Ascending aorta (tissue), 2 donors: ENCODE measurements at regions of chr2 and their contacts with region 1.

Region 1: GRCh38 chr2:236776695-236777251 is 207.1 kb downstream of the ACKR3 start:
- DNase-seq: peak; percentile 30 to 87
- H3K4me3 ChIP-seq: no peak overlapping the region
- H3K27ac ChIP-seq: peak overlapping the region; percentile 38 to 65
- H3K4me1 ChIP-seq: peaks cover 3 to 12% of the 10 kb centered on the region in 2 donors
- H3K27me3 ChIP-seq: no peaks in the 10 kb centered on the region
- CTCF ChIP-seq: no peak

Region 2: DNA sequence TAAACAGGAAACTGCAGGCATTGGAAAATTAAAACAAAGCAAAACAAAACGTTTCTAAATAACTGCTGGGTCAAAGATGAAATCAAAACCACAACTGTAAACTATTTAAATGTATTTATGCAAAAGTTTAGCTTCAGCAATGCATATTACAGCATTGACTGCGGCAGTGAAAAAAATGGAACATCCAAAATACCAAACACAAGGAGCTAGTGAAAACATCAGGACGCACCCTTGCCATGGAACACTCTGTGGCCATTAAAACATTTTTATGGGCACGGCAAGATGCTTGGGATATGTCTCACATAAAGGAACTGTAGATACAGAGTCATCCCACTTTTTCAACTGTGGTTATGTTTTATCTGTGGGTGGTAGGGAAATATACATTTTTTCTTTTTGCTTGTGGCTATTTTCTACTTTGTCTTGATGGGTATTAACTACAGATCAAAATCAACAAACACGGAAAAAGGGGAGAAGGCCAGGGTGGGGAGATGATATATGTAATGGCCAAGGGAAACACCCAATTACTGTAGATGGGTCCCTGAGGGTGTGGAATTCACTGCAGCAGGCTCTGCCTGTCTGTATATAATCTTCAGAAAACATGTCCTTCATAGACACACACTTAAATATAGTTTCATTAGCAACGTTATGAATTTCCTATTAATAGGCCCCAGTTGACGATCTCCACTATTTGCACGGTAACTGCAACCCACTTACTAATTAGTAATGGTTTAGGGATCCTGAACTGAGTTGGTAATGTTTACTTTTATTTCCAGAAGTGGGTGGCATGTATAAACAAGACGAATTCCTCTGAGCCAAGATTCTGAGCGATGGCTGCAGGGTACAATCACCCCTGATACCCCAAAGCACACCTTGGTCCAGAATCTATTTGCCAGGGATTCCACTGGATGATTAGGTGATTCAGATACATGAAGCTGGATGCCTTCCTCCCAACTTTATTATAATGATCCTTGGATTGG is 96.6 kb before region 1 on chr2:
- intact Hi-C with region 1: loop called (anchors 5 kb)
- DNase-seq: no peak
- H3K4me3 ChIP-seq: no peak overlapping the region
- H3K27ac ChIP-seq: no peak overlapping the region
- H3K4me1 ChIP-seq: peaks cover 0 to 14% of the 10 kb centered on the region in 2 donors
- H3K27me3 ChIP-seq: no peaks in the 10 kb centered on the region
- CTCF ChIP-seq: no peak

Region 3: DNA sequence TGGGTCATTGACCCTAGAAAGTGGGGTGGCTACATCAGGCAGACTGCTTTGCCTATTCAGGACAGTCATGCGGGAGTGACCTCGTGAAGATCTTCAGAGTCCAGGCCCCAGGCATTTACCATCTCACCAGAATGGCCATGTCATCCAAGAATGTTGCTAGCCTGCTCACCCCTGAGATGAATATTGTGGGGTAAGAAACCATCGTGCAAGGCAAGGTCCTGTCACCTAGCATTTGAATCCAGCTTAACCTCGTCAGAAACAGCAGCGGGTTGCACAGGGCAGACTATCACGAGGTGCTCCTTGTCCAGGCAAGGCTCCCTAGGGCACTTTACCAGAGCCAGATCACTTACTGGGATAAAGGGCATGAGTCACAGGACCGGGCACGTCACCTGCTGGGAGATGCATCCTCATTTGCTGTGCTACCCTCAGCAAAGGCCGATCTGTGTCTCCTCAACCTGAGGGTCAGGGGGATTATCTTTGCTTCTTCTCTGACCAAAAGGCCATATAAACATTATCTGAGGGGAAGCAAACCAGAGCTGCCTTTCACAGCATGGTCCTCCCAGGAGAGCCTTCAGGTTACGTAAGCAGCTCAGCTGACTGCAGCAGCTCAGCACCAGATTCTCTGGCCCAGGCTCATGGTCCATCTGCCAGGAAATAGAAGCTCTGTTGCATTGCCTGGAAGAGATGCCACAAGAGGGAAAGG is 44.7 kb before region 1 on chr2:
- intact Hi-C with region 1: loop called (anchors 2 kb)
- DNase-seq: peak; percentile 46 to 88
- H3K4me3 ChIP-seq: no peak overlapping the region
- H3K27ac ChIP-seq: peak overlapping the region; percentile 42 to 61
- H3K4me1 ChIP-seq: peaks cover 0 to 10% of the 10 kb centered on the region in 2 donors
- H3K27me3 ChIP-seq: no peaks in the 10 kb centered on the region
- CTCF ChIP-seq: no peak